ENCODE measurements at regions of chr1 and their contacts with region 1.

Region 1: DNA sequence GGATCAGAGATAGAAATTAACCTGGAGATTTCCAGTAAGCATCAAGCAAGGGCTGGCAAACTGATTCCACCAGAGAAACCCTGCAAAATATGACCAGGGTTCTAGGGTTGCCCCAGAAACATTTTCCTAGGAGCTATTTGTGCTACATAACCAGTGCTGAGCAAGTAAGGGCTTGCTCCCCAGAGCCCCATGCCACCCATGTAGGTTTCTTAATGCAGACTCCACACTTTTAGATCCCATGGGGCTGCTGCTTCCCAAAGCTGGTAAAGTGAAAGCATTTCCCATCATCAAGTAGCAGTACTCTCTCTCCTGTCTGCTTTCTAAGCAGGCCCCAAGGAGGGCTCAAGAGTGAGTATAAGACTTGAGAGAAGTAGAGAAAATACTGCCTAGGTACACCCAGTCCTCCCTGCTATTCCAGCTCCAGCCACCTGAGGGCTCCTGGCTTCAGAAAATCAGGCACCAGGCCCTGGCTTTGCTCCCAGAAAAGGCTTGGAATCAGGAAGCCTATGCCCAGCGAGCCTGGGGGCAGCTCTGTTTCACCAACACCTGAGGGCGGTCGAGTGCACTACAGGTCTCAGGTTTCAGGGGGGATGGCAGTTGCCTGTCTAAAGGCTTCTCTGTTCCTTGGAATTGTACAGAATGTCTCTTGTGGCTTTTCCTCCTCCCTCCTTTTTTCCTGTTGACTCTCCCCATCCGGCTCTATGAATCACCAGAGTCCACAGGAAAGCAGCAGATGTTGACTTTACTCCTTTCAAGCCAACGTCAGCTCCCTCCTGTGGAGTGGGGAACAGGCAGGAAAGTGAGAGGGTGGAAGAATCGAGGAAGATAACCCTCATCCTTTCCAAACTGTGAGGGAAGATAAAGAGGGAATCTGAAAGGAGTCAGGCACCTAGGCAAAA is 6.2 kb upstream of the ANKRD35 start:
- DNase-seq: peak; percentile 86 to 89 (median 87)
- ATAC-seq: peak; percentile 92
- H3K4me3 ChIP-seq: peak overlapping the region; percentile 4; the same call in 1 of the 2 replicates
- H3K27ac ChIP-seq: peak overlapping the region; percentile 40; the same call in 2 of the 3 replicates
- H3K4me1 ChIP-seq: peaks cover 15 to 28% of the 10 kb centered on the region in 2 experiments
- H3K27me3 ChIP-seq: no peaks in the 10 kb centered on the region
- CTCF ChIP-seq: peak; percentile 94 to 97 (median 95)
- EP300 ChIP-seq: no peak
- POLR2A ChIP-seq: no peak
- RAD21 ChIP-seq: peak; percentile 90 to 93

Region 2: GRCh38 chr1:145858894-145859490 is 32.8 kb before region 1 on chr1 and contains the start of gene PIAS3:
- CTCF ChIA-PET with region 1: no interaction called
- POLR2A ChIA-PET with region 1: interaction called, 11 read pairs
- in situ Hi-C with region 1: no loop called
- intact Hi-C with region 1: no loop called
- DNase-seq: peak; percentile 94 to 97 (median 96)
- ATAC-seq: peak; percentile 95
- H3K4me3 ChIP-seq: peak within 1 kb of the TSS; percentile 82
- H3K27ac ChIP-seq: peak within 1 kb of the TSS; percentile 73
- H3K4me1 ChIP-seq: peaks cover 10 to 18% of the 10 kb centered on the region in 2 experiments; a peak in 4 of 5 replicates
- H3K27me3 ChIP-seq: no peaks in the 10 kb centered on the region
- CTCF ChIP-seq: no peak
- EP300 ChIP-seq: no peak
- POLR2A ChIP-seq: peak; percentile 67
- RAD21 ChIP-seq: no peak
- polyA plus RNA-seq, gene PIAS3: 1.1 to 1.5 TPM

Region 3: DNA sequence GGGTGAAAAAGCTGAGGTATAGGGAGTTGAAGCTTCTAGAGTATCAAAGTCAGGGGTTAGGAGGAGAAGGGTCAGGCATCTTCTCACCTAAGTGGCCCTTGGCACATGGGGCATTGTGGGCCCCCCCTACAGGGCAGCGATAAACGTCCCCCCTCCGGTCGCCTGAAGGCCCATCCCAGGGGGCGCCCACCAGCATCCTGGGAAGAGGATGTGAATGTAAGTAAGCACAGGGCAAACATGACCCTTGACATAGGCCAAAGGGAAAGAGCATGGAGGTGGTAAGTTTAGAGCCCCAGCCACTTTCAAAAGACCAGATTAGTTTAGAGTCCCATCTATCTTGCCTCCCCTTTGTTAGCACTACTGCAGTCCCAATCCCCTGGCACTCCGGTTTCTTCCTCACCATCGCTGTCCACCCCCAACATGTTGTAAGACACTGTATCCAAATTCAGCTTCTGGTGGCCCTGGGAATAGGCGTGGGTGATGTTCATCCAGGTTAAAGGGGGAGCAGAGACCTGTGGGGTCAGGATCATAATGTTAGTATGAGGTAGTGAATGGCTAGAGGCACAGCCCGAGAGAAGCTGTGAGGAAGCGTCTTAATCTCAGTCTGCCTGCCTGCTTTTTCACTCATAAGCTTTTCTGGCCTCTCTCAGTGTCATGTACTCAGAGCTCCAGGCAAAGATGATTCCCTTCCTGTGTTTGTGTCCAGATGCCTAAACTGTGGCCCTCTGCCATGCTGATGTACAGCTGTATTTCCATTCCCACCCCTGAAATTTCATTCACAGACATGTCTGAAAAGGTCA is 15.3 kb after region 1 on chr1:
- CTCF ChIA-PET with region 1: interaction called, 6 read pairs
- POLR2A ChIA-PET with region 1: interaction called, 7 read pairs
- in situ Hi-C with region 1: no loop called
- intact Hi-C with region 1: loop called (anchors 1 kb)
- DNase-seq: peak in 1 of 4 experiments; percentile 8
- ATAC-seq: no peak; the same call in 2 of the 3 replicates
- H3K4me3 ChIP-seq: no peak overlapping the region
- H3K27ac ChIP-seq: no peak overlapping the region
- H3K4me1 ChIP-seq: no peaks in the 10 kb centered on the region; a peak in 1 of 5 replicates
- H3K27me3 ChIP-seq: no peaks in the 10 kb centered on the region
- CTCF ChIP-seq: no peak
- EP300 ChIP-seq: no peak
- POLR2A ChIP-seq: no peak
- RAD21 ChIP-seq: no peak

Region 4: DNA sequence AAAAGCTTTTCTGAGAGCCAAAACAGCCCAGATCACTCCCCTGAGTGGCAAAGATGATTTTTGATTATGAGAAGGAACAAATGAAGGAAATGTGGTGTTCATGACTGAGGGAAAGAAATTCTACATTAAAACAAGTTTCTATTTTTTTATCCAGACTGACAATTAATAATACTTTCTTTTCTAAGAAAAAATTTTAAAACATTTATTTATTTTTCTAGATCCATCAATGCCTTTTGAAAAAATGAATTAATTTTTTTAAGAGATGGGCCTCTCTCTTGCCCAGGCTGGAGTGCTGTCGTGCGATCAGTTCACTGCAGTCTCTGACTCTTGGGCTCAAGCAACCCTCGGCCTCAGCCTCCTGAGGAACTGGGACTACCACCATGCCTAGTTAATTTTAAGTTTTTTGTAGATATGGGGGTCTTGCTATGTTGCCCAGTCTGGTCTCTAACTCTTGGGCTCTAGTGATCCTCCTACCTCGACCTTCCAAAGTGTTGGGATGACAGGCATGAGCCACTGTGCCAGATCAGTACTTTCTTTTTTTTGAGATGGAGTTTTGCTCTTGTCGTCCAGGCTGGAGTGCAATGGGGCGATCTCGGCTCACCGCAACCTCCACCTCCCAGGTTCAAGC is 115.8 kb after region 1 on chr1:
- CTCF ChIA-PET with region 1: interaction called, 32 read pairs
- POLR2A ChIA-PET with region 1: no interaction called
- in situ Hi-C with region 1: no loop called
- intact Hi-C with region 1: loop called (anchors 2 kb)
- DNase-seq: no peak
- ATAC-seq: no peak
- H3K4me3 ChIP-seq: no peak overlapping the region
- H3K27ac ChIP-seq: peak overlapping the region; percentile 94; the same call in 2 of the 3 replicates
- H3K4me1 ChIP-seq: peaks cover 11 to 14% of the 10 kb centered on the region in 2 experiments
- H3K27me3 ChIP-seq: no peaks in the 10 kb centered on the region
- CTCF ChIP-seq: no peak
- EP300 ChIP-seq: no peak
- POLR2A ChIP-seq: no peak
- RAD21 ChIP-seq: no peak

Region 5: DNA sequence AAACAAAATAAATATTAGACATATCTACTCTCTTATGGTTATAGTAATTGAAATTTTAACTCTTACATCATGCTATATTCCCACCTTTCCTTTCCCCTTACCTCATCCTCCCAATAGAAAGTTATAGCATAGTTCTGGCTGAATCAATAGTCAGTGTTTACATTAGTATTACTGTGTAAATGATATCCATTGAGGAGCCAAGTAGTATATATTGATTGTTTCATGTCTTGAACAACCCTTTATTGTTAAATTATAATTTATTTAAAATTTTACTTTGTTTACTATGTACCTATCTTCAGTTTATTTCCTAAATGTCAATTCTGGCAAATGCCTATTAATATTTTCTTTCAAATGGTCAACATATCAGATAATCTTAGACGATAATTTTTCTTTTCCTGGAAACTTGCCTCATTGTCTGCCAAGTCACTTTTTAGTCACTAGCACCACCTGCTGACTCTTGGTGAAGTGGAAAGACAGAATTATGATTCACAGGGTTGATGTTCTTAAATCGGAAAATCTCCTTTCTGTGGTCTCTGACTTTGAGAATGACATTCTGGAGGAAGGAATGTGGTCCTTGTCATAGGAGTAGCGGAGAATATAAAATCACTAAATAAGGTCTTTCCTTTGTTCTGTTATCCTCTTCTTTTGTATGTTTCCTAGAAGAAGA is 121.0 kb after region 1 on chr1:
- CTCF ChIA-PET with region 1: interaction called, 32 read pairs
- POLR2A ChIA-PET with region 1: no interaction called
- in situ Hi-C with region 1: no loop called
- intact Hi-C with region 1: loop called (anchors 1 kb)
- DNase-seq: peak; percentile 51 to 83 (median 56)
- ATAC-seq: peak; percentile 84
- H3K4me3 ChIP-seq: no peak overlapping the region
- H3K27ac ChIP-seq: no peak overlapping the region
- H3K4me1 ChIP-seq: peaks cover 2 to 6% of the 10 kb centered on the region in 2 experiments
- H3K27me3 ChIP-seq: no peaks in the 10 kb centered on the region
- CTCF ChIP-seq: peak; percentile 78 to 97 (median 82)
- EP300 ChIP-seq: peak; percentile 26; the same call in 1 of the 2 replicates
- POLR2A ChIP-seq: no peak
- RAD21 ChIP-seq: peak; percentile 98

Measured in K562 (cell line).